ENCODE measurements at regions of chr18 and their contacts with region 1.

Region 1: DNA sequence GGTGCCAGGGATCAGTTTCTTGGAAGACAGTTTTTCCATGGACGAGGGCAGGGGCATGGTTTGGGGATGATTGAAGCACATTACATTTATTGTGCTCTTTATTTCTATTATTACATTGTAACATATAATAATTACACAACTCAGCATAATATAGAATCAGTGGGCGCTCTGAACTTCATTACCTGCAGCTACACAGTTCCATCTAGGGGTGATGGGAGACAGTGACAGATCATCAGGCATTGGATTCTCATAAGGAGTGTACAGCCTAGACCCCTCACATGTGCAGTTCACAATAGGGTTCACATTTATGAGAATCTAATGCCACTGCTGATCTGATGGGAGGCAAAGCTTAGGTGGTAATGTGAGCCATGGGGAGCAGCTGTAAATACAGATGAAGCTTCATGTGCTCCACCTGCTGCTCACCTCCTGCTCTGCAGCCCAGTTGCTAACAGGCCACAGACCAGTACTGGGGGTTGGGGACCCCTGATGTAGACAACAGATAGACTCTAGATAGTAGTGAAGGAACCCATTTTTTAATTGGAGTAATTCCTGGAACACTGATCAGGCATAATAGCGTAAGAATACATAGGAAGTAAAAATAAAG is 41.5 kb upstream of the MC4R start:
- DNase-seq: peak; percentile 5
- H3K4me3 Mint-ChIP-seq: no peak overlapping the region
- H3K27ac Mint-ChIP-seq: no peak overlapping the region
- H3K4me1 Mint-ChIP-seq: no peaks in the 10 kb centered on the region
- H3K27me3 Mint-ChIP-seq: no peaks in the 10 kb centered on the region

Region 2: DNA sequence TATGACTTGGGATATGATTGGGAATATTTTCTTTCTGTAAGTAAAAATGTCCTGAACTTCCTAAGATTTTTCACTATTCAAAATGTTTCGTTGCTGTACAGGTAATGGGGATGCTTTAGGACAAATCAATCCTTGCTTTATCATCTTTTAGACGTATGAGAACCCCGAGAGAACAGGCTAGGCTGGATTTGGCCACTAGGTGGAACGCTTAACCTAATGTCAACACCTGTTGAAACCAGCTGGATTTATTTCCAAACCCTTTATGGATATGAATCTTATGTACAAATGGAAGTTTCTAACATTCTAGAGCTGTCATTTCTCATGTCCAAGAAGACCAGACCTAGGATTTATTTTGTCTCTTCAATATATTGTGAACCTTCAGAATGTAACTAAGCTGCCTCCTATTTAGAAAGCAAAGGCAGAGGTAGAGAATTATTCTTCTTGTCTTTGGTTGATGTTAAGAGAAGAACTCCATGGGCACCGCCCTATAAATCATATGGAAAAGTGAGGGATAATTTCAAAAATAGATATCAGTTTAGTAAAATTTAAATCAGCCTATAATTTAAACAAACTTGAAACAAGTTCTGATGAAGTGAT is 417.6 kb before region 1 on chr18:
- CTCF ChIA-PET with region 1: no interaction called
- intact Hi-C with region 1: loop called (anchors 5 kb)
- DNase-seq: peak; percentile 56
- H3K4me3 Mint-ChIP-seq: no peak overlapping the region
- H3K27ac Mint-ChIP-seq: no peak overlapping the region
- H3K4me1 Mint-ChIP-seq: no peaks in the 10 kb centered on the region
- H3K27me3 Mint-ChIP-seq: peaks cover 21% of the 10 kb centered on the region

Measured in activated naive CD4-positive, alpha-beta T cell treated with anti-CD3 and anti-CD28 coated beads for 36 hours (primary cell).